Activated CD8-positive, alpha-beta T cell treated with anti-CD3 and anti-CD28 coated beads, Interleukin-2, amount 10 ng/mL, durations not matched to agents 7 days and 5 days (primary cell): ENCODE measurements at regions of chr7 and their contacts with region 1.

Region 1: DNA sequence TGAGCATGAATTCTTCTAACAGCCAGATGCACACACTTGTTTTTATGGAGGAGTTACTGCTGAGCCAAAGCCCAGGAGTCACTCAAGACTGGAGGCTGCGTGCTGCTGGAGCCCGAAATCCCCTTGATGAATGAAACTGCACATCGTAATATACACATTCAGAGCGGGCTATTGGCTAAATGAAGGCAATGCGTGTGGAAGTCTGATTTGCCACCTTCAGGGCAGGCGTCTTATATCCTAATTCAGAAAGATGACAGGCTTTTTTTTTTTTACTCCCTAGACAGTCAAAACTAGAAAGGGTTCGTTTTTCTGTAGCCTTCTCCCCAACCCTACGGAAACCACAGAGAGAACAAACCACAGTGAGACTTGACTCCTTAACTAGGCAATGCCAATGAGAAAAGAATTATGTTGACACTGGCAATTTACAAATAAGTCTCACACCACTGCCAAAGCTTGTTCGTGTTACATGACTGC is 227.2 kb upstream of the KLF14 start:
- DNase-seq: peak; percentile 90
- ATAC-seq: peak; percentile 88
- H3K4me3 Mint-ChIP-seq: peak overlapping the region; percentile 91
- H3K27ac Mint-ChIP-seq: peak overlapping the region; percentile 99
- H3K4me1 Mint-ChIP-seq: peaks cover 48% of the 10 kb centered on the region
- H3K27me3 Mint-ChIP-seq: no peaks in the 10 kb centered on the region

Region 2: DNA sequence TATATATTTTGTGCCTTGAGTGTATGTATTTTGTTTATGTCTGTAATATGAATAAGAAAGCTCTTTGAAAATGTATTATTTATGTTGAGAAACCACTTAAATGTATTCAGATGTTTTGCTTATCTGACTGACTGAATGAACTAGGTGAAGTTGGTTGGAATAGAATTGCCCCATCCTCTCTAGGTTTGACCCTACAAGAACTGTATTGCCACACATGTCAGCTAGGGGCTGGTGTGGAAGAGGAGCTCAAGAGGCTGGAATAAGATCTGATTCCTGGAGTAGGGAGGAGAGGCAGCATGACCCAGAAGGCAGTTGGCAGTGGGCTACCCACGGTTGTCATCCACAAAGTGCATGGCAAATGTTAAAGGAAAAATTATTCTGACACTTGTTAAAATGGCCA is 744.4 kb before region 1 on chr7:
- CTCF ChIA-PET with region 1: no interaction called
- POLR2A ChIA-PET with region 1: no interaction called
- DNase-seq: no peak
- ATAC-seq: no peak
- H3K4me3 Mint-ChIP-seq: no peak overlapping the region
- H3K27ac Mint-ChIP-seq: no peak overlapping the region
- H3K4me1 Mint-ChIP-seq: no peaks in the 10 kb centered on the region
- H3K27me3 Mint-ChIP-seq: peaks cover 3% of the 10 kb centered on the region

Region 3: DNA sequence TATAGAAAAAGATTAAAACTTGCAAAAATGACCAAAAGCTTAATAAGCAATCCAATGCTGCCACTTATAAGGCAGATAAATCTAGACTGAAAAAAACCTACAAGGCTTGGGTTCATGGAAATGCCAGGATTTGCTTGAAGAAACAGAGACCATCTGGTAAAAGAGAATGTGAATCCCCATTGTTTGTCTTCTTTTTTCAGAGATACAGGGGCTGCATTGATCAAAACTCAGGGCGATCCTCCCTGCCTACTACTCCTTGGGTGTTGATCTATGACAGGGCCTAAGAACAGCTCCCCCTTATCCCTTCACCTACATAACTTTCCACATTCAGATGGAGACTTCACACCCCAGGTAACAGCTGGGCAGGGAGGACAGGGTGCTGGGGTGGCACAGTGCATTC is 271.5 kb before region 1 on chr7:
- CTCF ChIA-PET with region 1: no interaction called
- POLR2A ChIA-PET with region 1: no interaction called
- DNase-seq: no peak
- ATAC-seq: no peak
- H3K4me3 Mint-ChIP-seq: no peak overlapping the region
- H3K27ac Mint-ChIP-seq: no peak overlapping the region
- H3K4me1 Mint-ChIP-seq: no peaks in the 10 kb centered on the region
- H3K27me3 Mint-ChIP-seq: no peaks in the 10 kb centered on the region

Region 4: DNA sequence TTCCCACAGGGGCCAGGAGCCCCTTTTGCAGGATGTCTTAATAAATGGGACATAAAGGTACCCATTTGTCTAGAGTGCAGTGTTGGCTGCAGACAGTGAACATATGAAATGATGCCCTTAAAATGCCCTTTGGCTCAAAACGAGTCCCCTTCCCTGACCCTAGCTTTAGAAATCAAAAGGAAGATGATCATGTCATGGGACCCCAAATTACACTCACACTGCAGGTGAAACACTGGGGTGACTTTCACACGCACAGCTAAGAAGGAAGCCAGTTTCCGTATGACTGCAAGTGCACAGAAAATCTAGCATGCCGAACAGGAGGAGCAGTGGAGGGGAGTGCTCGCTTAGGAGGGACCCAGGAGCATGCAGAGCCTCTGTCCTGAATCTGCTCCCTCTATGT is 72.7 kb before region 1 on chr7:
- CTCF ChIA-PET with region 1: no interaction called
- POLR2A ChIA-PET with region 1: no interaction called
- DNase-seq: no peak
- ATAC-seq: no peak
- H3K4me3 Mint-ChIP-seq: no peak overlapping the region
- H3K27ac Mint-ChIP-seq: peak overlapping the region; percentile 58
- H3K4me1 Mint-ChIP-seq: peaks cover 49% of the 10 kb centered on the region
- H3K27me3 Mint-ChIP-seq: no peaks in the 10 kb centered on the region

Region 5: DNA sequence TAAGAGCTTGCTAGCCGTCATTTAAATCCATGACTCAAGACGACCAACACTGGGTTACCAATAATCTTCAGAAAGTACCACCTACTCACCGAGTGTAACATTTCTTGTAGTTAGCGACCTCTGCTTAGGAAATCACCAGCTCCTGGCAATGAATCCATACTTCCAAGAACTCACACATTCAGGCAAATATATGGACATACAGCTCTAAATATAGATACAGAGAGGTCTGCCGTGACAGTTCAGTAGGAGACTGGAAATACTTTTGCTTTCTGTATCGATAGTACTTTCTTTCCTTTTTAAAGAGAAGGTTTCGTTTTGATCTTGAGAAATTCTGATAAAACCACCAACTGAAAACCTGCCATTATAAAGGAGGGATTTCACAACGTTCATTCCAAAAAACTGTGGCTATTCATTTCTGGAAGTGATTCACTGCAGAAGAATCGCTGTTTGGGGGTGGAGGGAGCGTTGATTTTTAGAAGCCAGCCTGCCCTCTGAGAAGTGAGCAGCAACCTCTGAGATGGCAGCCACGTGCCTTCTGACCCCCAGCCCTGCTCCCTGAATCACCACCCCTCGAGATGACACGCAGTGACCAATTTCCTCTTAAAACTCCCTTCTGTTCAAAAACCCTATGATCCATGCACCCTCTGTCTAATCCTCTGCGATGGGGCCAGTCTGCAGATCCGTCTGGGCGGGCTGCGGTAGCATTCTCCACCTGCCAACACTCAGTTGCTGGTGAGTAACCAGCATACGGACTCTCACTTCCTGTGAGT is 48.1 kb before region 1 on chr7:
- CTCF ChIA-PET with region 1: interaction called, 54 read pairs
- POLR2A ChIA-PET with region 1: interaction called, 105 read pairs
- DNase-seq: peak; percentile 89
- ATAC-seq: peak; percentile 92
- H3K4me3 Mint-ChIP-seq: peak overlapping the region; percentile 91
- H3K27ac Mint-ChIP-seq: peak overlapping the region; percentile 99
- H3K4me1 Mint-ChIP-seq: peaks cover 89% of the 10 kb centered on the region
- H3K27me3 Mint-ChIP-seq: no peaks in the 10 kb centered on the region

Region 6: GRCh38 chr7:130921391-130922180 is 39.6 kb before region 1 on chr7:
- CTCF ChIA-PET with region 1: interaction called, 14 read pairs
- POLR2A ChIA-PET with region 1: interaction called, 3 read pairs
- DNase-seq: peak; percentile 17
- ATAC-seq: no peak
- H3K4me3 Mint-ChIP-seq: no peak overlapping the region
- H3K27ac Mint-ChIP-seq: no peak overlapping the region
- H3K4me1 Mint-ChIP-seq: peaks cover 82% of the 10 kb centered on the region
- H3K27me3 Mint-ChIP-seq: no peaks in the 10 kb centered on the region

Region 7: DNA sequence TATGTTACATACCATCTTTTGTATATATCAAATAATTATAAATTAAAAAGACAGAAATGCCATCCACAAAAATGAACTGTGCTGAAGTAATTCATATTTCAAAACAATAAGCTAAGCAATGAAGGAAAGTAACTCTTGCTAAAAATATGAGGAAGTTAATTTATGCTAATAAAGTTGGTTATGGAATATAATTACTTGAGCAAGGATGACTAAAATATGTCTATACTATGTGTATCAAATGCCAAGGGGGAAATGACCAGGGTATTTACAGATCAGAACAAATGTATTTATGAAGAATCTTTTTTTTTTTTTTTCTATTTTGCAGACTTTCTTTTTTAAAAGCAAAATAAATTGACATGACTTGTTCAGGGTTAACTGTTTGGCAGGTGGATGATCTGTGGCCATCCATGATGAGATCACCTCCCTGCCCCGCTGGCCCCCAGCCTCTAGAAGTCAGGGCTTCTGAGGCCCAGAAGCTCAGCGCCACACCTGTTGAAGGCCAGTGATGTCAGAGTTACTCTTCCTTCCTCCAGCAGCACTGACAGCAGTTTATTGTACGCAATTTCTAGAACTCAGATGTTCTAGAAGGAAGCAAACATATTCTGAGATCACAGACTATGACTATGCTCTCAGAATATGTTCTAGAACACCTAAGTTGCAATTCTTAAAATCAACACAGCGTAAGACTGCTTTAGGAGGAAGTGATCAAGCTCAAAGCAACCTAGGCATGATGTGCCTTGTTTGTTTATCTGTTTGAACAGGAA is 31.1 kb before region 1 on chr7:
- CTCF ChIA-PET with region 1: interaction called, 12 read pairs
- POLR2A ChIA-PET with region 1: interaction called, 14 read pairs
- DNase-seq: no peak
- ATAC-seq: no peak
- H3K4me3 Mint-ChIP-seq: no peak overlapping the region
- H3K27ac Mint-ChIP-seq: peak overlapping the region; percentile 40
- H3K4me1 Mint-ChIP-seq: peaks cover 61% of the 10 kb centered on the region
- H3K27me3 Mint-ChIP-seq: no peaks in the 10 kb centered on the region

Region 8: GRCh38 chr7:130941322-130942210 is 19.6 kb before region 1 on chr7:
- CTCF ChIA-PET with region 1: interaction called, 68 read pairs
- POLR2A ChIA-PET with region 1: interaction called, 95 read pairs
- DNase-seq: no peak
- ATAC-seq: peak; percentile 18
- H3K4me3 Mint-ChIP-seq: peak overlapping the region; percentile 72
- H3K27ac Mint-ChIP-seq: peak overlapping the region; percentile 75
- H3K4me1 Mint-ChIP-seq: peaks cover 83% of the 10 kb centered on the region
- H3K27me3 Mint-ChIP-seq: no peaks in the 10 kb centered on the region

Region 9: DNA sequence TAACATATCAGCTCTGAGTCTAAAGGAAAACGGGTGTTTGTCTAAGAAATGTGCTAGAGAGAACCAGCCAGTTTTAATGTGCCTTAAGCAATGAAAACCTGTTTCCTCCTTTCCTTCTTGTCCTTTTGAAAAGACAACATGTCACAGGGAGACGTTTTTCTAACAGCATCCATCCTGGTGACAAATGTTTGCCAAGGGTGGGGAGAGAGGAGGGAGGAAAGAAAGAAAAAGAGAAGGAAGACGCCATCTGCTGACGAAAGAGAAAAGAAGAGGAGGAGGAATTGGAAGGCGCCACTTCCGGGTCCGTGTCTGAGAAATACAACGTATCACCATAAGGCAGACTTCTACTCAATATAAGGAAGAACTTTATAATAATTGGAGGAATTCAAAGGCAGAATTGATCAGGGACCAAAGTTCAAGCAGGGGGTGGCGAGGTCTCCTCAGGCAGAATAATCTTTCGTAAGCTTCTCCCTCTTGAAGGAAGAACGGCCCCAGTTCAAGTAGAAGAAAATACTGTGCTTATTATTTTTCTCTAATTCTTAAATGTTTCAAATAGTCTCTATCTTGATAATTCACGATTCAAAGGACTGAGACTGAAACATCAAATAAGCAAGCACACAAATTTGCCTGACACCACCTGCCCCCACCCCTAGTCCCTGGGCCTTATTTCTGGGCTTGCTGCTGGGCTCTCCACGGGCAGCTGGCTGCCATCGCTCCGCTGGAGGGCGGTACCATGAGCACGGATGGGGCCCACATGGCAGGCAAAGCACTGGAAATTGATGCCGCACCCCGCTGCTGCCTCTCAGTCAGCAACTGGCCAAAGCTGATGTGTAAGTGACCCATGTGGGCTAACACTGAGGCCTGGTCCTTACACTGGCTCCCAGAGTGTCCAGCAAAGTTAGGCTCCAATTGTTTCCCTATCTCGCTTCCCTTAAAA is 46.5 kb after region 1 on chr7:
- CTCF ChIA-PET with region 1: interaction called, 40 read pairs
- POLR2A ChIA-PET with region 1: interaction called, 18 read pairs
- DNase-seq: peak; percentile 82
- ATAC-seq: peak; percentile 70
- H3K4me3 Mint-ChIP-seq: peak overlapping the region; percentile 69
- H3K27ac Mint-ChIP-seq: peak overlapping the region; percentile 94
- H3K4me1 Mint-ChIP-seq: peaks cover 63% of the 10 kb centered on the region
- H3K27me3 Mint-ChIP-seq: no peaks in the 10 kb centered on the region

Region 10: DNA sequence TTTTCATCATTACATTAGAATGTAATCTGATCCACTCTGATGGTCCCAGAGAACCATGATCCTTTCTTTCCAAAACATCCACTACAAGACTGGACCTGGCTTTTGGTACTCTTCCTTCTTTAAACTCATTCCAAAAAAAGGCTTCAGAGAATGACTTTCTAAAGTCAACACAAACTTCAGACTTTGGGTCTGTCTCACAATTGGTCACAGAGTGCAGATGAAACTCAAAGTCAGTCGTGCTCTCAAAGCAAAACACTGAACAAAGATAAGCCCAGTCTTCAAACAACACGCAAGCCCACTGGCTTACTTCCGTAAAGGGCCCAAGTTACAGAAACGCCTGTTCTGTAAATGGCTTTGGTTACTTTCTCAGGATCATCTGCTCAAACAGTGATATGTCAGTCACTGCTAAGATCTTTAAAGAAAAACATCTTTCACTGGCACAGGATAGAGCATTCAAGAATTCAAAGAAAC is 115.6 kb after region 1 on chr7:
- CTCF ChIA-PET with region 1: no interaction called
- POLR2A ChIA-PET with region 1: no interaction called
- DNase-seq: no peak
- ATAC-seq: no peak
- H3K4me3 Mint-ChIP-seq: no peak overlapping the region
- H3K27ac Mint-ChIP-seq: no peak overlapping the region
- H3K4me1 Mint-ChIP-seq: peaks cover 9% of the 10 kb centered on the region
- H3K27me3 Mint-ChIP-seq: no peaks in the 10 kb centered on the region

Region 11: GRCh38 chr7:131107337-131108211 is 146.4 kb after region 1 on chr7:
- CTCF ChIA-PET with region 1: interaction called, 3 read pairs
- POLR2A ChIA-PET with region 1: interaction called, 13 read pairs
- DNase-seq: peak; percentile 85
- ATAC-seq: peak; percentile 40
- H3K4me3 Mint-ChIP-seq: peak overlapping the region; percentile 96
- H3K27ac Mint-ChIP-seq: peak overlapping the region; percentile 97
- H3K4me1 Mint-ChIP-seq: peaks cover 65% of the 10 kb centered on the region
- H3K27me3 Mint-ChIP-seq: no peaks in the 10 kb centered on the region